ENCODE measurements at regions of chr1 and their contacts with region 1.

Region 1: DNA sequence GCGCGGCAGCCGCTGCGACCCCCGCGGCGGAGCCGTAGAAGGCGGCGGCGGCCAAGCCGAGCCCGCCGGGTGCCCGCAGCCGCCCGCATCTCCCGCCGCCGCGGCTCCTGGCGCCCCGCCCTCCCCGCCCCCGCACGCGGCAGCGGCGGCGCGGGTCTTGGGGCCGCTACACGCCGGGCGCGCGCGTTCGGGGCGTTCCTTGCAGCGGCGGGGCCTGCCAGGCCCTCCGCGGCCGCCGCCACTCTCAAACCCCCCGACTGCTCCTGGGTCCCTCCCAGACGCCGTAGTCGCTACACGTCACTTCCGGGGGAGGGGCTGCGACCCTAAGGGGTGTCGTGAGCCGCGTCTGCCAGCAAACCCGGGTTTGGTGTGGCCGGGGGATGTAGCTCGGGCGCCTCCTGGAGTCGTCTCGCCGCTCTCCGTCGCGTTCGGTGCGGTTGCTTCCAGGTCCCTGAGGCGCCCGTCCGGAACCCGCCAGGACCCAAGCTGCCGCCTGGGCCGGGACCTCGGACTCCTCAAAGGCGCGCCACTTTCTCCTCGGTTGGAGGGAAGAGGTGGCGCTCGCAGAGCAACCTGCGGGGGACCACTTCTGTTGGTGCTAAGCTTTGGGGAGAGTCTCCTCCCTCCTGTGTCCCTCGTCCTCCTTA is at the start of gene ELK4:
- DNase-seq: peak; percentile 99
- ATAC-seq: peak; percentile 83
- H3K4me3 Mint-ChIP-seq: peak within 1 kb of the TSS; percentile 90
- H3K27ac Mint-ChIP-seq: peak within 1 kb of the TSS; percentile 98
- H3K4me1 Mint-ChIP-seq: peaks cover 42% of the 10 kb centered on the region
- H3K27me3 Mint-ChIP-seq: peaks cover 4% of the 10 kb centered on the region
- total RNA-seq, gene ELK4: 95.2 to 97.5 TPM

Region 2: DNA sequence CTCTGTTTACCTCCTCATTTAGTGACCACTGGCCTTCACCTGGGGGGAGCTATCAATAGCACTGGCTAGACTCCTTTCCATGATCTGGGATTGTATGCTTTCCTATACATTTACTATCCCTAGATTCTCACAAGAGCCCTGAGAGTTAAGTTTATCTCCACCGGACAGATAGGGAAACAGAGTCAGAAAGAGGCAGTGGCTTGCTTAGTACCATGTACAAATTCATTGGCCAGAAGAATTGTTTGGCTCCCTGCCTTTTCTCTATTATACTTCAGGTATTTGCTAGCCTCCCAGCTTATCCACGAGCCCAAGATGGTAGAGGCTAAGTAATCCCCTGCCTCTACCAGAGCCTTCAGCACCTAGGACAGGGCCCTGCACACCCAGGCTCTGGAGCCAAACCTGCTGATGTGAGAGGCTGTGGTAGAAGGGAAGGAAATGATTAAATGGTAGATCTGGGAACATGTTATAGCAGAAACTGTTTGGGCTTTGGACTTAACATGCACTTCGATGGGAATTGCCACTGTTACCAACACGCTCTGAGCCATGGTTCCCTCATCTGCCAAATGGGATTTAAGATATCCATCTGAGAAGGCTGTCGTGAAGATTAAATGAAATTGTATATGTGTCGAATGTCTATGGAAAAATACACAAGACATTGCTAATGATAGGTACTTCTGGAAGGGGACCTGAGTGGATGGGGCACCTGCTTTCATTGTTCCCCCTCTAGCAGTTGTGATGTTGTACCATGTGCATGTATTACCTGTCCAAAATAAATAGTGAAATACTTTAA is 172.9 kb before region 1 on chr1:
- CTCF ChIA-PET with region 1: no interaction called
- POLR2A ChIA-PET with region 1: no interaction called
- DNase-seq: peak; percentile 65
- ATAC-seq: peak; percentile 69
- H3K4me3 Mint-ChIP-seq: no peak overlapping the region
- H3K27ac Mint-ChIP-seq: no peak overlapping the region
- H3K4me1 Mint-ChIP-seq: peaks cover 11% of the 10 kb centered on the region
- H3K27me3 Mint-ChIP-seq: peaks cover 54% of the 10 kb centered on the region

Region 3: DNA sequence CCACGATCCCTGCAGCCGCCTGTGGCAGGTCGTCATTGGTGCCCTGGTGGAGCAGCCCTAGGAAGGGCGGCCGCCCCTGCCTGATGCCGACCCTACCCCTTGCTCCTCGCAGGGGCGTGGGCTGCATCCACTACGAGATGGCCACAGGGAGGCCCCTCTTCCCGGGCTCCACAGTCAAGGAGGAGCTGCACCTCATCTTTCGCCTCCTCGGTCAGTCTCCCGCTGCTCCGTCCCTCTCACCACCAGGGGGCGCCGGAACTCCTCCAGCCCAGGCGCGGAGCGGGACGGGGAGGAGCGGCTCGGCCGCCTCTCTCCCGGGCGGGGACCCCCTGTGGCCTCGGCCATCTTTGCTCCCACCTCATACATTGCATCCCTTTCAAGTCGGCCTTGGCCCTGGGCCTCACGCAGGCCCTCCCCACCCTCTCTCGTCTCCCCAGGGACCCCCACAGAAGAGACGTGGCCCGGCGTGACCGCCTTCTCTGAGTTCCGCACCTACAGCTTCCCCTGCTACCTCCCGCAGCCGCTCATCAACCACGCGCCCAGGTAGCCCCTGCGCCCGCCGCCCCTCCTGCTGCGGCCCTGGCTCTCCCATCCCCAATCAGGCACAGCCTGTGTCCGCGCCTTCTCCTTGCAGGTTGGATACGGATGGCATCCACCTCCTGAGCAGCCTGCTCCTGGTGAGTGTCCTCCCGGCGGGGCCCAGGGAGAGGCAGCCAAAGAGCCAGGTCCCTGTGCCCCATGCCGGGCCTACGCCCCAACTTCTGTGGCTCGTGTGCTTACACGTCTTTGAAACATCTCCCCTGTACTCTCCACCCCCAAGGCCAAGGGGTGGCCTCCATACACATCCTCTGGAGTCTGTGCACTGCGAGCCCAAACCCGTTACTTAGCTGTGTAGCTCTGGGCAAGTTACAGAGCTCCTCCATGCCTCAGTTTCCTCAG is 102.7 kb before region 1 on chr1:
- CTCF ChIA-PET with region 1: interaction called, 23 read pairs
- POLR2A ChIA-PET with region 1: interaction called, 6 read pairs
- DNase-seq: peak; percentile 87
- ATAC-seq: peak; percentile 95
- H3K4me3 Mint-ChIP-seq: peak overlapping the region; percentile 43
- H3K27ac Mint-ChIP-seq: no peak overlapping the region
- H3K4me1 Mint-ChIP-seq: peaks cover 4% of the 10 kb centered on the region
- H3K27me3 Mint-ChIP-seq: no peaks in the 10 kb centered on the region

Region 4: DNA sequence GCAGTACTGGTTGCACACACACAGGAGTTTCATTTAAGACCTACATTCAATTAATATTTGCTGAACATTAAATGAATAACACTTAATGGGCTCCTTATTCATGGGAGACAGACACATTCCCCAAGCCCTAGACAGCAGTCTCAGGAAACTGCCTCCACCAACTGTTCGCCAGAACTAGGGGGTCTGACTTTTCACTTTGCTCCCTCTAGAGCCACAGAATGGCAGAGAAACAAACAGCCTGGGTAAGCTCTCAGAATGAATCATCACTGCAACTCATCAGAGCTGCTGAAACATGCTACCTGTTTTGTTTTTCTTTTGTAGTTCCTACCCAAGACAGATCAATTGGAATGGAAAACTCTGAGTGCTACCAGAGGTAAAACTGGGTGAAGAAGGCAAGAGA is 31.8 kb before region 1 on chr1:
- CTCF ChIA-PET with region 1: interaction called, 364 read pairs
- POLR2A ChIA-PET with region 1: interaction called, 198 read pairs
- DNase-seq: peak; percentile 37
- ATAC-seq: peak; percentile 71
- H3K4me3 Mint-ChIP-seq: no peak overlapping the region
- H3K27ac Mint-ChIP-seq: peak overlapping the region; percentile 62
- H3K4me1 Mint-ChIP-seq: peaks cover 27% of the 10 kb centered on the region
- H3K27me3 Mint-ChIP-seq: no peaks in the 10 kb centered on the region

Region 5: GRCh38 chr1:205645519-205645918 is 13.7 kb after region 1 on chr1:
- CTCF ChIA-PET with region 1: interaction called, 16 read pairs
- POLR2A ChIA-PET with region 1: interaction called, 6 read pairs
- DNase-seq: no peak
- ATAC-seq: no peak
- H3K4me3 Mint-ChIP-seq: no peak overlapping the region
- H3K27ac Mint-ChIP-seq: no peak overlapping the region
- H3K4me1 Mint-ChIP-seq: no peaks in the 10 kb centered on the region
- H3K27me3 Mint-ChIP-seq: peaks cover 7% of the 10 kb centered on the region